ENCODE measurements at regions of chr12 and their contacts with region 1.

Region 1: GRCh38 chr12:49623142-49623904 is at the start of gene PRPF40B:
- DNase-seq: peak; percentile 80 to 93 (median 88)
- ATAC-seq: peak; percentile 80 to 82
- H3K4me3 Mint-ChIP-seq: peak within 1 kb of the TSS; percentile 82 to 94 (median 91)
- H3K27ac Mint-ChIP-seq: peak within 1 kb of the TSS; percentile 41 to 97 (median 92)
- H3K4me1 Mint-ChIP-seq: peaks cover 10 to 31% (median 23%) of the 10 kb centered on the region in 4 donors
- H3K27me3 Mint-ChIP-seq: peaks cover 0 to 7% (median 0%) of the 10 kb centered on the region in 5 donors
- polyA plus RNA-seq, gene PRPF40B: 1.5 to 4.0 (median 2.3) TPM

Region 2: DNA sequence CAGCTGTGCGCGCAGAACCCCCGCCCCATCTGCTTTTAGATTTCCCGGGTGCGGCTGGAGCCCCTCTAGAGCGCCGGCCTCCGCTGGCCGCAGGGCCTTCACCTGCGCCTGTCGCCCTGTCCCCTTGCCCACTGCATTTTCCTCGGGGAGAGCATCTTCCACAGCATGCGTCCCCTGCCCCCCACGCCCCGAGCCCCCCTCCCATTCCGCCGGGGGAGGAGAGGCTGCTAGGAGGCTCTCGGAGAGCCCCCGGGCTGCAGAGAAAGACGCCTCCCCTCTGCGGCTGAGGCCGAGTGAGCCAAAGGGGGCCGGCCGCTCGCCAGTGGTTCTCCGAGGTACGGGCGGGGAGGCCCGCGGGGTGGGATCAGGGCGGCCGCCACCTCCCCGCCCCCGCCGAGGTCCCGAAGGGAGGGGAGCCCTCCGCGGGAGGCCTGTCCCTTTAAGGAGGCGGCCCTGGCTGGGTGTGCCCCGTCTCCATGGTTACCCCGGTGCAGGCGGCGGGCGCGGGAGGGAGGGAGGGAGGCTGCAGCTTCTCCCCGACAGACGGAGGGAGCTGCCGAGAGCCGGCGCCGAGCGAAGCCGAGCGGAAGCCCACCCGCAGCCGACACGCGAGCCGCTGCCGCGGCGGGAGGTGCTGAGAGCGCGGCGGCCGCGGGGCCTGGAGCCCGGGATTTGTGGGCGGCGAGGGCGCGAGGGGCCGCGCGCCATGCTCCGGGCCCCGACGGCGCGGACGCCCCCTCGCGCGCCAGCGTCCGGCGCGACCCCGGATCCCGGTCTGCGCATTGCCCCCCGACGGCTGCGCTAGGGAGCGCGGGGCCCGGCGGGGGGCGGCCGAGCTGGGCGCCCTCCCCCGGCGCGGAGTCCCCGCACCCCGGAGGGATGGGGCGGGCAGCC is 84.6 kb before region 1 on chr12 and contains the start of gene KCNH3:
- POLR2A ChIA-PET with region 1: no interaction called
- DNase-seq: peak; percentile 85 to 98 (median 88)
- ATAC-seq: peak; percentile 83 to 91
- H3K4me3 Mint-ChIP-seq: peak within 1 kb of the TSS; percentile 75 to 88 (median 80)
- H3K27ac Mint-ChIP-seq: peak within 1 kb of the TSS in 9 of 10 donors; percentile 17 to 90 (median 67)
- H3K4me1 Mint-ChIP-seq: peaks cover 22 to 50% (median 44%) of the 10 kb centered on the region in 4 donors
- H3K27me3 Mint-ChIP-seq: peaks cover 0 to 5% (median 0%) of the 10 kb centered on the region in 5 donors
- polyA plus RNA-seq, gene KCNH3: 2.4 to 5.7 (median 3.4) TPM

Region 3: GRCh38 chr12:49636979-49637755 is 13.8 kb after region 1 on chr12:
- POLR2A ChIA-PET with region 1: interaction called, 10 read pairs
- DNase-seq: peak; percentile 22 to 80 (median 54)
- ATAC-seq: peak; percentile 98 to 99
- H3K4me3 Mint-ChIP-seq: no peak overlapping the region
- H3K27ac Mint-ChIP-seq: peak overlapping the region in 9 of 10 donors; percentile 1 to 80 (median 51)
- H3K4me1 Mint-ChIP-seq: peaks cover 25 to 38% (median 32%) of the 10 kb centered on the region in 4 donors
- H3K27me3 Mint-ChIP-seq: no peaks in the 10 kb centered on the region

Measured in naive thymus-derived CD8-positive, alpha-beta T cell (primary cell).